Stomach (tissue), 19 donors: ENCODE measurements at regions of chr17 and their contacts with region 1.

Region 1: DNA sequence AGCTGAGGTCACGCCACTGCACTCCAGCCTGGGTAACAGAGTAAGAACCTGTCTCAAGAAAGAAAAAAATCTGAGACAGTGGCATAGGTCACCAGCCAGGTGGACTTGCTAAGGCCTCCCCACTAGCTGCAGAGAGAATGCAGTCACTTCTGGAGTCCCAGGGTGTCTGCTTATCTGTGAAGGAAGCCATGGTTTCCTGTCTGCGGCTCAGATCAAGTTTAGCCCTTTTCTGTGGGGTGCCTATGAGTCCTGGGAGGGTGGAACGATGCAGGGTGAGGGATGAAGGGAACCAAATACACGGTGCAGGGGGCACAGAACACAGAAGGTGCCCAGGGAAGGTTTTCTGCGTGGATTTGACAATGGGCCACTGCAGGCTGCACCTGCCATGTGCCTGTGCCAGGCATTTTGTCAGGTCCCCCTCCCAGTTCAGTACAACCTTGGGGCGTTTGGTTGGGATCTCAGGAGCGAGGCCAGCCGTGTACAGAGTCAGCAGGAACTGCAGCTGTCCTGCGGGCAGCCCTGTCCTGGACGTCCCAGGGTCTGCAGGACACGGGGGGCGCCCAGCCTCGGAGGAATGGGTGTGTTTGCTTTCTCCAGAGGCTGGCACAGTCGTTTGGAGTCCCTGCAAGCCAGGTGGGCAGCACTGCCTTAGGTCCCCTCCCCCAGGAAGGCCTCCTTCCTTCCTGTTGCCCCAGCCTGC is 41.8 kb downstream of the RAB11FIP4 start:
- DNase-seq: no peak
- H3K4me3 ChIP-seq: no peak overlapping the region
- H3K27ac ChIP-seq: no peak overlapping the region
- H3K4me1 ChIP-seq: peaks cover 0 to 8% (median 7%) of the 10 kb centered on the region in 4 donors
- H3K27me3 ChIP-seq: peaks cover 0 to 63% (median 6%) of the 10 kb centered on the region in 3 donors
- CTCF ChIP-seq: no peak
- EP300 ChIP-seq: no peak
- POLR2A ChIP-seq: no peak

Region 2: GRCh38 chr17:31524926-31525800 is 91.9 kb after region 1 on chr17:
- intact Hi-C with region 1: loop called (anchors 5 kb)
- DNase-seq: peak; percentile 85 to 95
- H3K4me3 ChIP-seq: no peak overlapping the region
- H3K27ac ChIP-seq: no peak overlapping the region
- H3K4me1 ChIP-seq: peaks cover 0 to 9% (median 7%) of the 10 kb centered on the region in 4 donors
- H3K27me3 ChIP-seq: no peaks in the 10 kb centered on the region
- CTCF ChIP-seq: peak; percentile 10 to 91 (median 85)
- EP300 ChIP-seq: no peak
- POLR2A ChIP-seq: no peak